CD4-positive, alpha-beta T cell (primary cell): ENCODE measurements at regions of chrX and their contacts with region 1.

Region 1: DNA sequence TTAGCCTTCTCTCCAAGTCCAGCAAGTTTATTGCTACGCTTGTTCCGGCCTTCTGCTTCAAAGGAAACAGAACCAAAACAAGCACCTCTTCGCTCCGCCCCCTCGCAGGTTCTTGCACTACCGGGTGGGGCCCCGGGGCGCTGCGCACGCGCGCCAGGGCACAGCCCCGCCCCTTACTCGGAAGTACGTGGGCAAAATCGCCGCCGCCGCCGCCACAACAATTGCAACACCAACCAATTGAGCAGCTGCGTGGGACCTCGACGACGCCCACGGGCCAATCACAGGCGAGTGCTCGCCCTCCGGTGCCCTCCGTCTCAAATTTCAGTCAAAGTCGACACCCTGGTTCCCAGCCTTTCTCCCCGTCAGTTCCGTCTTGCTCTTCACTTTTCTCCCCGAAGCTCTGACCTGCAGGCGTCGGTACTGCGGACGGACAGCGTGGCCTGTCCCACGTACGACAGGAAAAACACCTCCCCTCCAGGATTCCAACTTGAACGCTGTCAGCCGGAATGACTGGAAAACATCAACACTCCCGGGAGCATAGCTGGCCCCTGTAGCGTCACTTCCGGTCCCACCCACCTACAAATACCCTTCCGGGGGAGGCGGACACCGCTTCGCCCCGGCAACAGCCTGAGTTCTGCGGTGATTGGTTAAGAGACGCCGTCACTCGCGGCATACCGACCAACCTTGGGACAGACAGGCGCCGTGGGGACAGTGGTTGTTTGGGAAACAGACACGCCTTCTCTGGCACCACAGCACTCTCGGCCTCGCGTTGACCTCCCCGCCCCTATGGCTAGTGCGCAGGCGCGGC is 624 bp upstream of the OTUD5 start:
- DNase-seq: peak; percentile 86 to 97 (median 92)
- ATAC-seq: peak; percentile 80
- H3K4me3 ChIP-seq: peak overlapping the region; percentile 70
- H3K4me3 Mint-ChIP-seq: peak overlapping the region; percentile 99
- H3K27ac ChIP-seq: peak overlapping the region; percentile 93 to 98
- H3K27ac Mint-ChIP-seq: peak overlapping the region; percentile 99
- H3K4me1 ChIP-seq: peaks cover 54% of the 10 kb centered on the region
- H3K4me1 Mint-ChIP-seq: peaks cover 50% of the 10 kb centered on the region
- H3K27me3 ChIP-seq: no peaks in the 10 kb centered on the region
- H3K27me3 Mint-ChIP-seq: no peaks in the 10 kb centered on the region
- CTCF ChIP-seq: no peak

Region 2: GRCh38 chrX:48574270-48575266 is 383.5 kb before region 1 on chrX and contains the start of gene RBM3:
- CTCF ChIA-PET with region 1: no interaction called
- POLR2A ChIA-PET with region 1: interaction called, 11 read pairs
- intact Hi-C with region 1: no loop called
- DNase-seq: peak; percentile 80 to 97 (median 90)
- ATAC-seq: peak; percentile 93
- H3K4me3 ChIP-seq: peak within 1 kb of the TSS; percentile 87
- H3K4me3 Mint-ChIP-seq: peak within 1 kb of the TSS; percentile 98
- H3K27ac ChIP-seq: peak within 1 kb of the TSS; percentile 99 to 100
- H3K27ac Mint-ChIP-seq: peak within 1 kb of the TSS; percentile 98
- H3K4me1 ChIP-seq: peaks cover 26% of the 10 kb centered on the region
- H3K4me1 Mint-ChIP-seq: peaks cover 27% of the 10 kb centered on the region
- H3K27me3 ChIP-seq: no peaks in the 10 kb centered on the region
- H3K27me3 Mint-ChIP-seq: no peaks in the 10 kb centered on the region
- CTCF ChIP-seq: peak; percentile 36
- total RNA-seq, gene RBM3: 351 to 377 TPM

Region 3: GRCh38 chrX:48801280-48802088 is 156.5 kb before region 1 on chrX and contains the start of gene HDAC6:
- CTCF ChIA-PET with region 1: no interaction called
- POLR2A ChIA-PET with region 1: interaction called, 26 read pairs
- intact Hi-C with region 1: loop called (anchors 5 kb)
- DNase-seq: peak; percentile 87 to 99 (median 93)
- ATAC-seq: peak; percentile 84
- H3K4me3 ChIP-seq: peak within 1 kb of the TSS; percentile 87
- H3K4me3 Mint-ChIP-seq: peak within 1 kb of the TSS; percentile 93
- H3K27ac ChIP-seq: peak within 1 kb of the TSS; percentile 89 to 97
- H3K27ac Mint-ChIP-seq: peak within 1 kb of the TSS; percentile 99
- H3K4me1 ChIP-seq: peaks cover 17% of the 10 kb centered on the region
- H3K4me1 Mint-ChIP-seq: peaks cover 18% of the 10 kb centered on the region
- H3K27me3 ChIP-seq: no peaks in the 10 kb centered on the region
- H3K27me3 Mint-ChIP-seq: no peaks in the 10 kb centered on the region
- CTCF ChIP-seq: no peak
- total RNA-seq, gene HDAC6: 95.2 to 95.7 TPM

Region 4: GRCh38 chrX:48911412-48912182 is 46.4 kb before region 1 on chrX and contains the start of gene SLC35A2:
- CTCF ChIA-PET with region 1: no interaction called
- POLR2A ChIA-PET with region 1: interaction called, 26 read pairs
- intact Hi-C with region 1: loop called in 1 of 2 experiments (anchors 5 kb)
- DNase-seq: peak; percentile 83 to 93 (median 86)
- ATAC-seq: peak; percentile 74
- H3K4me3 ChIP-seq: peak within 1 kb of the TSS; percentile 75
- H3K4me3 Mint-ChIP-seq: peak within 1 kb of the TSS; percentile 88
- H3K27ac ChIP-seq: peak within 1 kb of the TSS; percentile 79 to 86
- H3K27ac Mint-ChIP-seq: peak within 1 kb of the TSS; percentile 94
- H3K4me1 ChIP-seq: peaks cover 61% of the 10 kb centered on the region
- H3K4me1 Mint-ChIP-seq: peaks cover 50% of the 10 kb centered on the region
- H3K27me3 ChIP-seq: no peaks in the 10 kb centered on the region
- H3K27me3 Mint-ChIP-seq: peaks cover 5% of the 10 kb centered on the region
- CTCF ChIP-seq: no peak
- total RNA-seq, gene SLC35A2: 19.1 to 21.8 TPM

Region 5: DNA sequence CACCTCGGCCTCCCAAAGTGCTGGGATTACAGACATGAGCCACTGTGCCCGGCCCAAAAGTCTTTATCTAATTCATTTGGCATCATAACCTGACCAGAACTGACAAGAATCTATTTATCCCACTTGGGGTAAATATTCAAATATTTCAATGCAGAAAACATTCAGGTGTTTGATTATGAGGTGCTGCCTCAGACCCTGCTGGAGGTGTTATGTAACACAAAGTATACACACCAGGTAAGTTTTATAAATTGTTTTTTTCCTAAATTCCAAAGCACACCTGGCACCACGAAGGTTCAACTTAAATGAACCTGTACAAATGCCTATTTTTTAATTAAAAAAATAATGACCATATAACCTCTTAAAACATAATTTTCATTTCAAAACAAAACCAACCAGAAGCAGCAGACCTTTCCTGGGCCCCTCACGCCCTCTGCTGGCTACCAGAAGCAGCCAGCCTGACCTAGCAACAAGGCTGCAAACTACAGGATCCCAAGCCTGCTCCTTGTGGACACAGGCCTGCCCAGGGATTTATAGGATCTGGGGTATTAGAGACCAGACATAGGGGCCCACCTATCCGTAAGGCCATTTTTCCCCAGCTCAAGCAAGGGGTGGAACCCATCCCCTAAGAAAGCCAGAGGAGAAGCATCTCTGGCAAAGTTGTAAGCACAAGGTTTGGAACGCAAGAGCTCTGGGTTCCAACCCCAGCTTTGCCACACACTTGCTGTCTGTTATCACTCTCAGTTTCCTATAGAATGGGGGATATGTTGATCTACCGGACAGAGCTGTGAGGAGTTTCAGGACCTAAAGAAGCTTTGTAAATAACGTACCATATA is 12.3 kb before region 1 on chrX:
- CTCF ChIA-PET with region 1: interaction called, 3 read pairs
- POLR2A ChIA-PET with region 1: interaction called, 150 read pairs
- intact Hi-C with region 1: no loop called
- DNase-seq: peak; percentile 30 to 75 (median 52)
- ATAC-seq: peak; percentile 67
- H3K4me3 ChIP-seq: no peak overlapping the region
- H3K4me3 Mint-ChIP-seq: no peak overlapping the region
- H3K27ac ChIP-seq: peak overlapping the region in 1 of 2 donors; percentile 22
- H3K27ac Mint-ChIP-seq: peak overlapping the region; percentile 74
- H3K4me1 ChIP-seq: peaks cover 74% of the 10 kb centered on the region
- H3K4me1 Mint-ChIP-seq: peaks cover 49% of the 10 kb centered on the region
- H3K27me3 ChIP-seq: no peaks in the 10 kb centered on the region
- H3K27me3 Mint-ChIP-seq: no peaks in the 10 kb centered on the region
- CTCF ChIP-seq: peak; percentile 71

Region 6: GRCh38 chrX:49043220-49043986 is 85.4 kb after region 1 on chrX and contains the start of gene TFE3:
- CTCF ChIA-PET with region 1: interaction called, 4 read pairs
- POLR2A ChIA-PET with region 1: interaction called, 26 read pairs
- intact Hi-C with region 1: loop called (anchors 2 to 5 kb)
- DNase-seq: peak; percentile 87 to 99 (median 93)
- ATAC-seq: peak; percentile 86
- H3K4me3 ChIP-seq: peak within 1 kb of the TSS; percentile 66
- H3K4me3 Mint-ChIP-seq: peak within 1 kb of the TSS; percentile 96
- H3K27ac ChIP-seq: peak within 1 kb of the TSS; percentile 84 to 88
- H3K27ac Mint-ChIP-seq: peak within 1 kb of the TSS; percentile 94
- H3K4me1 ChIP-seq: peaks cover 42% of the 10 kb centered on the region
- H3K4me1 Mint-ChIP-seq: peaks cover 39% of the 10 kb centered on the region
- H3K27me3 ChIP-seq: no peaks in the 10 kb centered on the region
- H3K27me3 Mint-ChIP-seq: no peaks in the 10 kb centered on the region
- CTCF ChIP-seq: peak; percentile 41
- total RNA-seq, gene TFE3: 38.6 to 40.9 TPM

Region 7: DNA sequence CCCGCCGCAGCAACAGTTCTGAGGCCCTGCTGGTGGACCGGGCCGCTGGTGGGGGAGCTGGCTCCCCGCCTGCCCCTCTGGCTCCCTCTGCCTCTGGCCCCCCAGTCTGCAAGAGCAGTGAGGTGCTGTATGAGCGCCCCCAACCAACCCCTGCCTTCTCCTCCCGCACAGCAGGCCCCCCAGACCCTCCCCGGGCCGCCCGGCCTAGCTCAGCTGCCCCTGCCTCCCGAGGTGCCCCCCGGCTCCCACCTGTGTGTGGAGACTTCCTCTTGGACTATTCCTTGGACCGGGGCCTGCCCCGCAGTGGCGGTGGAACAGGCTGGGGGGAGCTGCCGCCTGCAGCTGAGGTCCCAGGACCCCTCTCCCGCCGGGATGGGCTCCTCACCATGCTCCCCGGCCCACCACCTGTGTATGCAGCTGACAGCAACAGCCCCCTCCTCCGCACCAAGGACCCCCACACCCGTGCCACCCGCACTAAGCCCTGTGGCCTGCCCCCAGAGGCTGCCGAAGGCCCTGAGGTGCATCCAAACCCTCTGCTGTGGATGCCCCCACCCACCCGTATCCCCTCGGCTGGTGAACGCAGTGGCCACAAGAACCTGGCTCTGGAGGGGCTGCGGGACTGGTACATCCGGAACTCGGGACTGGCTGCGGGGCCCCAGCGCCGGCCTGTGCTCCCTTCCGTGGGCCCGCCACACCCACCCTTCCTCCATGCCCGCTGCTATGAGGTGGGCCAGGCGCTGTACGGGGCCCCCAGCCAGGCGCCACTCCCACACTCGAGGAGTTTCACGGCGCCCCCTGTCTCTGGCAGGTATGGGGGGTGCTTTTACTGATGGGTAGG is 109.5 kb after region 1 on chrX:
- CTCF ChIA-PET with region 1: no interaction called
- POLR2A ChIA-PET with region 1: no interaction called
- intact Hi-C with region 1: no loop called
- DNase-seq: no peak
- ATAC-seq: no peak
- H3K4me3 ChIP-seq: no peak overlapping the region
- H3K4me3 Mint-ChIP-seq: no peak overlapping the region
- H3K27ac ChIP-seq: no peak overlapping the region
- H3K27ac Mint-ChIP-seq: no peak overlapping the region
- H3K4me1 ChIP-seq: peaks cover under 1% of the 10 kb centered on the region
- H3K4me1 Mint-ChIP-seq: no peaks in the 10 kb centered on the region
- H3K27me3 ChIP-seq: no peaks in the 10 kb centered on the region
- H3K27me3 Mint-ChIP-seq: no peaks in the 10 kb centered on the region
- CTCF ChIP-seq: no peak